ENCODE measurements at regions of chr10 and their contacts with region 1.

Region 1: DNA sequence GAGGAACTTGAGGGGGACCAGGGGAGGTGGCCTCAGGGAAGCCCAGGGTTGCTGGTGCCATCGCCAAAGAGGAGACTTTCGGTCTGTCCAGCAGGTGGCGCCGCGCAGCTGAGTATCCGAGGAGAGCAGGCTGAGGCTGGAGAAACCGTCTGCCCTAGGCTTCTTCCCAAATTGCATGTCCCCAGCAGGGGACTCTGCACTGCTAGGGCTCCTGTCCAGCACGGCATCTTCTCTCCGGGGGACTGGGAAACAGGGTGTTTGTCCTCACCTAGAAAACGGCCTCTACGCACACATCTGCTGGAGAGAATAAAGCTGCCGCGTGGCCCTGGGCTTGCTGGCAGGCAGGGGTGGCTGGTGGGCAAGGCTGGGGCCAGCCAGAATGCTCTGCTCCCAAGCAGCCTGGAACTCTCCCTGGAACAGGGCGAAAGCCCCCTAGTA is 161.9 kb downstream of the SH2D4B start:
- DNase-seq: peak; percentile 78
- H3K4me3 ChIP-seq: peak overlapping the region in 1 of 2 experiments; percentile 43; a peak in 1 of 4 replicates
- H3K27ac ChIP-seq: no peak overlapping the region
- H3K4me1 ChIP-seq: peaks cover 0 to 35% of the 10 kb centered on the region in 2 experiments; a peak in 1 of 4 replicates
- H3K27me3 ChIP-seq: no peaks in the 10 kb centered on the region
- CTCF ChIP-seq: peak; percentile 74
- EP300 ChIP-seq: no peak
- RAD21 ChIP-seq: peak; percentile 83

Region 2: GRCh38 chr10:80670763-80671162 is 28.9 kb before region 1 on chr10:
- CTCF ChIA-PET with region 1: interaction called, 17 read pairs
- POLR2A ChIA-PET with region 1: no interaction called
- DNase-seq: no peak
- H3K4me3 ChIP-seq: no peak overlapping the region
- H3K27ac ChIP-seq: no peak overlapping the region
- H3K4me1 ChIP-seq: no peaks in the 10 kb centered on the region; a peak in 1 of 4 replicates
- H3K27me3 ChIP-seq: no peaks in the 10 kb centered on the region
- CTCF ChIP-seq: no peak
- EP300 ChIP-seq: no peak
- RAD21 ChIP-seq: no peak

Region 3: GRCh38 chr10:80684259-80684658 is 15.4 kb before region 1 on chr10:
- CTCF ChIA-PET with region 1: interaction called, 17 read pairs
- POLR2A ChIA-PET with region 1: no interaction called
- DNase-seq: peak; percentile 58
- H3K4me3 ChIP-seq: no peak overlapping the region
- H3K27ac ChIP-seq: no peak overlapping the region
- H3K4me1 ChIP-seq: no peaks in the 10 kb centered on the region; a peak in 1 of 4 replicates
- H3K27me3 ChIP-seq: no peaks in the 10 kb centered on the region
- CTCF ChIP-seq: no peak
- EP300 ChIP-seq: no peak
- RAD21 ChIP-seq: no peak

Region 4: GRCh38 chr10:80737209-80737608 is 37.6 kb after region 1 on chr10:
- CTCF ChIA-PET with region 1: interaction called, 10 read pairs
- POLR2A ChIA-PET with region 1: no interaction called
- DNase-seq: no peak
- H3K4me3 ChIP-seq: no peak overlapping the region
- H3K27ac ChIP-seq: no peak overlapping the region
- H3K4me1 ChIP-seq: no peaks in the 10 kb centered on the region
- H3K27me3 ChIP-seq: no peaks in the 10 kb centered on the region
- CTCF ChIP-seq: no peak
- EP300 ChIP-seq: no peak
- RAD21 ChIP-seq: no peak

Region 5: DNA sequence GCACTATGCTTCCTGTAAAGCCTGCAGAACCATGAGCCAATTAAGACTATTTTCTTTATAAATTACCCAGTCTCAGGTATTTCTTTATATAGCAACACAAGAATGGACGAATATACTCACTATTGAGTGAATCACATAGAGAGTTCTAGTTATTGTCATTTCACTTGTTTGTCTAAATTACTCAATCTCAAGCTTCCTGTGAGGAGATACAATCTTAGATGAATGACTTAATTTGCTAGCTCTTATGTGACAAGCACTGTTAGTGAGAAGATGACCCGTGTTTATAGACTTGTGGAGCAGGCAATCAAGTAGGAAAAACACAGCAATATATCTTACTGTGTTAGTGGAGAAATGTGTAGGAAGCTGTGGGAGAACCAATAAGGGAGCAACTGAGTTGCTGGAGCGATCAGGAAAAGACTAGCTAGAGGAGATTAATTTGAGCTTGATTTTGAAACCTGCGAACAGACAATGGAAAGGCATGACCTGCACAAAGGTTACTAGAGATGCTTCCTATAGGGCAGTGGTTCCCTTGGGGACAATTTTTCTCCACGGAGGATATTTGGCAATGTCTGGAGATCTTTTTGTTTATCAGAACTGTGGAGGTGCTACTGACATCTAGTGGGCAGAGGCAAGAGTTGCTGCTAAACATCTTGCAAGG is 319.2 kb after region 1 on chr10:
- CTCF ChIA-PET with region 1: interaction called, 10 read pairs
- POLR2A ChIA-PET with region 1: no interaction called
- DNase-seq: peak; percentile 1
- H3K4me3 ChIP-seq: 0 out of 4 replicates have a peak overlapping the region, but pooled peaks of 1 of the 2 experiments have one; percentile 43
- H3K27ac ChIP-seq: no peak overlapping the region
- H3K4me1 ChIP-seq: no peaks in the 10 kb centered on the region
- H3K27me3 ChIP-seq: no peaks in the 10 kb centered on the region
- CTCF ChIP-seq: peak; percentile 54
- EP300 ChIP-seq: no peak
- RAD21 ChIP-seq: peak; percentile 63